Activated CD4-positive, alpha-beta T cell treated with anti-CD3 and anti-CD28 coated beads for 36 hours (primary cell): ENCODE measurements at regions of chr7 and their contacts with region 1.

Region 1: GRCh38 chr7:2863461-2864066 is 19.5 kb upstream of the GNA12 start:
- DNase-seq: peak; percentile 88
- ATAC-seq: peak; percentile 98
- H3K4me3 Mint-ChIP-seq: peak overlapping the region; percentile 66
- H3K27ac Mint-ChIP-seq: peak overlapping the region; percentile 95
- H3K4me1 Mint-ChIP-seq: peaks cover 28% of the 10 kb centered on the region
- H3K27me3 Mint-ChIP-seq: no peaks in the 10 kb centered on the region

Region 2: DNA sequence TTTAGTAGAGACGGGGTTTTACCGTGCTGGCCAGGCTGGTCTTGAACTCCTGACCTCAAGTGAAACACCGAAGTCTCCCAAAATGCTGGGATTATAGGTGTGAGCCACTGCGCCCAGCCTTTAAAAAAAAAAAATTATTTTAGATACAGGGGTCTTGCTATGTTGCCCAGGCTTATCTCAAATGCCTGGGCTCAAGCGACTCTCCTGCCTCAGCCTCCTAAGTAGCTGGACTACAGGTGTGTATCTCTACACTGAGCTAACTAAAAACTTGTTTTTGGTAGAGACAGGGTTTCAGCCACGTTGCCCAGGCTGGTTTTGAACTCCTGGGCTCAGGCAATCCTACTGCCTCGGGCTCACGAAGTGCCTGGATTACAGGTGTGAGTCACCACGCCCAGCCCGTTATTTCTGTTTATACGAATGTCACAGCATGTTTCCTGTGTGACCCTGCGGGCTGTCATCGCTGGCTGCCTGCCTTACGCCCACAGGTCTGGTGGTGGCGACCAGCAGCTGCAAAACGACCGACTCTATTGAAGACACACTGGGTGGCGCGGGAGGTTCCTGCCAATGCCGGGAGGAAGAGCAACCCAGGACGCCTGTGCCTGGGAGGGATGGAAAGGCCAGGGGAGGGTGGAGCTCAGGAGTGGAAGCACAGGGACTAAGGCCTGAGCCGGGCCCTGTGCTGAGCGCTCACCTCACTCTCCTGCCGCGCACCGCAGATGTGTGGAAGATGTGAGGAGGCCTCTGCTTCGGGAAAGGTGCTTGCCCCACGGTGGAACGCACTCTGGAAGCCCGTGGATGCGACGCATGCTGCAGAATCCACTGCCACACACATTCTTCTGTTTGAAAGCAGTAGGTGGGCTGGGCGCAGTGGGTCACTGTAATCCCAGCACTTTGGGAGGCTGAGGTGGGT is 142.7 kb before region 1 on chr7:
- CTCF ChIA-PET with region 1: no interaction called
- POLR2A ChIA-PET with region 1: no interaction called
- intact Hi-C with region 1: loop called in 1 of 2 experiments (anchors 5 kb)
- DNase-seq: peak; percentile 95
- ATAC-seq: peak; percentile 86
- H3K4me3 Mint-ChIP-seq: no peak overlapping the region
- H3K27ac Mint-ChIP-seq: peak overlapping the region; percentile 32
- H3K4me1 Mint-ChIP-seq: peaks cover 49% of the 10 kb centered on the region
- H3K27me3 Mint-ChIP-seq: no peaks in the 10 kb centered on the region

Region 3: DNA sequence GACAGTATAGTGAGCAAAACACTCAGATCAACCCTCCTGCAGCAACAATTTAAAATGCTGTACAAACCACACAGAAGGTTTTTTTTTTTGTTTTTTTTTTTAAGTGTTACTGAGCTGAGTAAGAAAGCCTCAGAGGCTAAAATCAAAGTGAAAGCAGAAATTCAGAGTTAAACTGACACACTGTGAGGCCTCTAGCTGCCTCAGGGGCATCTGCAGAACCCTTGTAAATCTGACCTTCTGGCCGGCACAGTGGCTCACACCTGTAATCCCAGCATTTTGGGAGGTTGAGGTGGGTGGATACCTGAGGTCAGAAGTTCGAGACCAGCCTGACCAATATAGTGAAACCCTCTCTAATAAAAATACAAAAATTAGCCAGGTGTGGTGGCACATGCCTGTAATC is 12.1 kb before region 1 on chr7:
- CTCF ChIA-PET with region 1: interaction called, 11 read pairs
- POLR2A ChIA-PET with region 1: no interaction called
- intact Hi-C with region 1: no loop called
- DNase-seq: peak; percentile 47
- ATAC-seq: peak; percentile 94
- H3K4me3 Mint-ChIP-seq: no peak overlapping the region
- H3K27ac Mint-ChIP-seq: peak overlapping the region; percentile 71
- H3K4me1 Mint-ChIP-seq: peaks cover 3% of the 10 kb centered on the region
- H3K27me3 Mint-ChIP-seq: no peaks in the 10 kb centered on the region

Region 4: DNA sequence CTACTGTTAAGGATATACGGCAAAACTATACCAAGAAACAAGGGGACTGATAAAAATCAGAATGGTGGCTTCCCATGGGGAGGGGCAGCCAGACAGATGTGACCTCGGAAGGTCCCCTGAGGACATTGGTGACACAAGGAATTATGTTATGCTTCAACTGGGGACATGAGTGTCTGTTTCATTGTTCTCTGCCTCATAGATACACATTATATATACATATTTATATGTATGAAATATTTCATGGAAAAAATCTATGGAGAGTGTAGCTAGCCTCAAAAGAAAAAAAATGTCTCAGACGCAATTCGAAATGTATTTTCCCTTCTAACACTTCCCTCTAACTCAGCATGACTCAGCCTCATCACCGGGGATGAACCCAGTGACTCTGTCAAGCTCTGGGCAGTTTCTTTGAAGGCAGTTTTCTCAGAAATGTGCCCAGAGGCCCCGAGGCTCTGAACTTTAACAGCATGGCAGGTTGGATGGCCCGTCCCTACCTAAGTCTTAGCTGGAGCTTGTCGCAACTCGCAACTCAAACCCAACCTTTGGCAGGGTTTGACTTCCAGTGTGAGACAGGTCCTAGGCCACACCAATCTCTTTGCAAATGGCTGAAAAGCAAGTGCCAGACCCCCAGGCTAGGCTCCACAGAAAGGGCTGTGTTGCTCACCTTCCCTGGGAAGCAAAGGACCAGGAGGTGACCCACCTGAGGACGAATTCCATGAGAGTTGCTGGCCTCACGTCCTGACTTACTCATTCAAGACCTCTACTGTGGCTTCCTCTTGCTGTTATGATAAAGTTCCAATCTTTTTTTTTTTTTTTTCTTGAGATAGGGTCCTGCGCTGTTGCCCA is 93.2 kb after region 1 on chr7:
- CTCF ChIA-PET with region 1: no interaction called
- POLR2A ChIA-PET with region 1: no interaction called
- intact Hi-C with region 1: loop called in 1 of 2 experiments (anchors 10 kb)
- DNase-seq: peak; percentile 80
- ATAC-seq: peak; percentile 86
- H3K4me3 Mint-ChIP-seq: peak overlapping the region; percentile 38
- H3K27ac Mint-ChIP-seq: peak overlapping the region; percentile 83
- H3K4me1 Mint-ChIP-seq: peaks cover 73% of the 10 kb centered on the region
- H3K27me3 Mint-ChIP-seq: no peaks in the 10 kb centered on the region

Region 5: DNA sequence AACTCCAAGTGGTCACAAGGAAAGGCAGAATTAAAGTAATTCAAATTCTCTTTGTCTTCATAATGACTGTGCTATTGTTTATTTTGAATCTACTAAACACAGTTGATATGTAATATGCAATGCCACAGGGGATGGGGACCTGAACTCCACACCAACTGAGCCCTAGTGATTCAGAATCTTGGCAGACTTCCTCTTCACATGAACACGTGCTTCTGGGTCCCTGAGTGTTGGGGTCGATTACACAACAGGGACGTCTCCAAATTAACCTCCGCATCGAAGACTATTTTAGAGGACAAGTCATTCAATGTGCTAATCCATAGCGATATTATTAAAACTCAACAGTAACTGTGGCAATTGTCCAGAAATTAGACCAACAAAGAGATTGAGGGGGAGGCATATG is 275.4 kb after region 1 on chr7:
- CTCF ChIA-PET with region 1: no interaction called
- POLR2A ChIA-PET with region 1: no interaction called
- intact Hi-C with region 1: no loop called
- DNase-seq: no peak
- ATAC-seq: no peak
- H3K4me3 Mint-ChIP-seq: no peak overlapping the region
- H3K27ac Mint-ChIP-seq: no peak overlapping the region
- H3K4me1 Mint-ChIP-seq: peaks cover 8% of the 10 kb centered on the region
- H3K27me3 Mint-ChIP-seq: no peaks in the 10 kb centered on the region

Region 6: DNA sequence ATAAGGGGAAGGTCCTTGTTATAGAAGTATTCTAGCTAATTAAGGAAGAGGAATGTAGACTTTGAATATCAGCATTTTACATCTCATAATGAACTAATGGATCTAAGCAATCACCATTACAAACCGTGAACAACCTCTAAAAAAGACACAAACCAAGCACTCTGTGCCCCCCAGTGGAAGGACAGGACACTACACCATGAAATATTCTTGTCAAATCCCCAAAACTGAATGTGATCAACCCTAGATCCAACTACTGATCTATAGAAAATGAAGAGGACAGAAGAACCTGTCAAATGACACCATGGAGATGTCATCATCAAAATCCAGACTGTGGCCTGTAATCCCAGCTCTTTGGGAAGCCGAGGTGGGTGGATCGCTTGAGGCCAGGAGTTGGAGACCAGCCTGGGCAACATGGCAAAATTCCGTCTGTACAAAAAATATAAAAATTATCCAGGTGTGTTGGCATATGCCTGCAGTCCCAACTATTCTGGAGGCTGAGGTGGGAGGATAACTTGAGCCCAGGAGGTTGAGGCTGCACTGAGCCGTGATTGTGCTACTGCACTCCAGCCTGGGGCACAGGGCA is 291.4 kb after region 1 on chr7:
- CTCF ChIA-PET with region 1: interaction called, 24 read pairs
- POLR2A ChIA-PET with region 1: no interaction called
- intact Hi-C with region 1: loop called (anchors 1 kb)
- DNase-seq: peak; percentile 80
- ATAC-seq: peak; percentile 72
- H3K4me3 Mint-ChIP-seq: no peak overlapping the region
- H3K27ac Mint-ChIP-seq: no peak overlapping the region
- H3K4me1 Mint-ChIP-seq: peaks cover 26% of the 10 kb centered on the region
- H3K27me3 Mint-ChIP-seq: peaks cover 2% of the 10 kb centered on the region

Region 7: DNA sequence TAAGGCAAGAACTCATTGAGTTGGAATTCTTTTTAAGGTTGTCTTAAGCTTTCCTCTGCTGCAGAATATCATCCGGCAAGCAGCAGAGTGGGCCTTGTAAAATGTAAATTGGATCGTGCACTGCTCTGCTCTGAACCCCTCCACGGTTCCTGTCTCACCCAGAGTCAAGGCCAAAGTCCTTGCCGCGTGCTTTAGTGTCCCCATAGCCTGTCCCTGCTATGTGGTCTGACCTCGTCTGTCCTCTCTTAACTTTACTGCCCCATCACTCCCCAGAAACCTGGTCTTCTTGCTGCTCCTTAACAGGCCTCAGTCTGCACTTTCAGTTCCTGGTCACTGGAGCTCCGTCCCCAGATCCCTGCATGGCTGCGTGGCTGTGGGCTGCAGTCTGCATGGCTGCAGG is 315.9 kb after region 1 on chr7:
- CTCF ChIA-PET with region 1: no interaction called
- POLR2A ChIA-PET with region 1: no interaction called
- intact Hi-C with region 1: no loop called
- DNase-seq: no peak
- ATAC-seq: no peak
- H3K4me3 Mint-ChIP-seq: no peak overlapping the region
- H3K27ac Mint-ChIP-seq: no peak overlapping the region
- H3K4me1 Mint-ChIP-seq: no peaks in the 10 kb centered on the region
- H3K27me3 Mint-ChIP-seq: no peaks in the 10 kb centered on the region

Region 8: DNA sequence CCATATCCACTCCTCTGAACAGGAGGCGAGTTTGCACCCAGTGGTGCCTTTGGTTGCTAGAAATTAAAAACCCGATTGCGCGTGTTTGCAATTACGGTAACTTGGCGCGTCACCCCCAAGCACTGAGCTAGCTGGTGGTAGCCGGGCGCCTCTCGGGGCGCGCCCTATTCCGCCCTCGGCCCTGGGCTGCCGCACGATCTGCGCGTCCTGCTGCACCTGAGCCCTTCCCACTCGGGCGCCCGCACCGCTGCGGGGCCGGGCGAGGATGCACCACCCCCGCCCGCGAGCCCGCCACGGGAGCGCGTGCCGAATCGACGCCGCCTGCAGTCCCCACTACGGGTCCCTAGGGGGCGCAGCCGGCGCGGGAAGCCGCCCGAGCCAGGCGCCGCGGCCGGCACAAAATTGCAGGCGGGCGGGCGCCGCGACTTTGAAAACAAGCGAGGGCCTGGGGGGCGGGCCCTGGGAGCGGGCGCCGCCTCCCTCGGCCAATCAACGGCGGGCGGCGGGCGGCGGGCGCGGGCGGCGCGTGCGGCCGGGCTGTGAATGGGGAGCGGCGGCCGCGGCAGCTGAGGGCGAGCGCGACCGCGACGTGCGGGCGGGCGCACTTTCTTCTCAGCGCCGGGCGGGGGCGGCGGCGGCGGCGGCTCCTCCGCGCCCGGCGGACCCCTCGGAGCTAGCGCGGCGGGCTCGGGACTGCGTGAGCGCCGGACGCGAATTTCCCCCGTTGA is 437.3 kb after region 1 on chr7 and contains the start of gene SDK1:
- CTCF ChIA-PET with region 1: interaction called, 5 read pairs
- POLR2A ChIA-PET with region 1: no interaction called
- intact Hi-C with region 1: loop called in 1 of 2 experiments (anchors 2 kb)
- DNase-seq: peak; percentile 96
- ATAC-seq: peak; percentile 86
- H3K4me3 Mint-ChIP-seq: peak within 1 kb of the TSS; percentile 75
- H3K27ac Mint-ChIP-seq: no peak within 1 kb of the TSS
- H3K4me1 Mint-ChIP-seq: peaks cover 12% of the 10 kb centered on the region
- H3K27me3 Mint-ChIP-seq: peaks cover 22% of the 10 kb centered on the region
- total RNA-seq, gene SDK1: 1.1 to 1.9 TPM

Region 9: GRCh38 chr7:3897438-3898385 is 1034.1 kb after region 1 on chr7:
- CTCF ChIA-PET with region 1: no interaction called
- POLR2A ChIA-PET with region 1: no interaction called
- intact Hi-C with region 1: loop called (anchors 1 to 2 kb)
- DNase-seq: peak; percentile 67
- ATAC-seq: peak; percentile 60
- H3K4me3 Mint-ChIP-seq: no peak overlapping the region
- H3K27ac Mint-ChIP-seq: no peak overlapping the region
- H3K4me1 Mint-ChIP-seq: no peaks in the 10 kb centered on the region
- H3K27me3 Mint-ChIP-seq: peaks cover 4% of the 10 kb centered on the region